Activated CD4-positive, alpha-beta T cell treated with anti-CD3 and anti-CD28 coated beads, Interleukin-2, amount 10 ng/mL, durations not matched to agents 24 days and 14 days (primary cell): ENCODE measurements at regions of chr15 and their contacts with region 1.

Region 1: GRCh38 chr15:99826157-99826780 is 93.0 kb upstream of the LYSMD4 start:
- DNase-seq: no peak
- H3K4me3 Mint-ChIP-seq: peak overlapping the region; percentile 43
- H3K27ac Mint-ChIP-seq: peak overlapping the region; percentile 92
- H3K4me1 Mint-ChIP-seq: peaks cover 26% of the 10 kb centered on the region
- H3K27me3 Mint-ChIP-seq: no peaks in the 10 kb centered on the region

Region 2: GRCh38 chr15:99545605-99546004 is 280.7 kb before region 1 on chr15:
- intact Hi-C with region 1: no loop called
- DNase-seq: no peak
- H3K4me3 Mint-ChIP-seq: no peak overlapping the region
- H3K27ac Mint-ChIP-seq: no peak overlapping the region
- H3K4me1 Mint-ChIP-seq: peaks cover 5% of the 10 kb centered on the region
- H3K27me3 Mint-ChIP-seq: peaks cover 4% of the 10 kb centered on the region

Region 3: DNA sequence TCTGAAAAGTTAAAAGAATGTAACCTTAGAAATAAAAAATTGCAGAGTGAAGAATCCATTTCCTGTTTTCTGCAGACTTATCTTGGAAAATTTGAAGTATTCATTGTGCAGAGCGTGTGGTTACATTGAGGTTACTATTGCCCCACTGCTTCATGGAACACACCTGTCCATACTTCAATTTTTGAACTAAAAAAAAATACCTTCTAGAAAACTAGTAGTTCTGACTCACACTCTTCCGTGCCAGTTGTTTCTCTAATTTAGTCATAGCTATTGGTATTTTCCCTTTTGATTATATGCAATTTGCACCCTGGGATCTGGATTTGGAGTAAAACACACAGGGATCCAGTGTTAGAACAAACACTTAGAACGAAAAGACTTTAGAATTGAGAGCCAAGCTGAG is 18.7 kb after region 1 on chr15:
- intact Hi-C with region 1: loop called (anchors 1 kb)
- DNase-seq: no peak
- H3K4me3 Mint-ChIP-seq: peak overlapping the region; percentile 13
- H3K27ac Mint-ChIP-seq: peak overlapping the region; percentile 79
- H3K4me1 Mint-ChIP-seq: peaks cover 30% of the 10 kb centered on the region
- H3K27me3 Mint-ChIP-seq: no peaks in the 10 kb centered on the region

Region 4: GRCh38 chr15:100802421-100803170 is 976.3 kb after region 1 on chr15:
- intact Hi-C with region 1: no loop called
- DNase-seq: no peak
- H3K4me3 Mint-ChIP-seq: no peak overlapping the region
- H3K27ac Mint-ChIP-seq: no peak overlapping the region
- H3K4me1 Mint-ChIP-seq: no peaks in the 10 kb centered on the region
- H3K27me3 Mint-ChIP-seq: peaks cover 3% of the 10 kb centered on the region